Activated CD4-positive, alpha-beta T cell treated with anti-CD3 and anti-CD28 coated beads, Interleukin-2, amount 10 ng/mL, durations not matched to agents 7 days and 5 days (primary cell): ENCODE measurements at regions of chr20 and their contacts with region 1.

Region 1: DNA sequence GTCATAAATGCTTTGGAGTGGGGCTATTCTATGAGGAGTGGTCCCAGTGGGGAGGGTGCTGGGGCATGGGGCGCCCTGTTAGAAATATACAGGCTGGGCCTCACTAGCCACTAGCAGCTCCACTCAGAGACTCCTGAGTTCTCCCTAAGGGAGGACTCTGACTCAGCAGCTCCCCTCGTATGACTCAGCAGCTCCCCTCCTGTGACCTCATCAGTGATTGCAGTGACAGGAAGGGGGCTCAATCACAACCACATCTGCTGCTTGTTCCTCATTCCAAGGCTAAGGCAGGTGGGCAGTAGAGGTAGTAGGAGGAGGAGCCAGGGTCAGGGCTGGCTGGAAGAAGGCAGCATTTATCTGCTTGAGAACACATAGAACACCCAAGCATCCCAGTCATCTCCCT is 73.7 kb downstream of the PRND start:
- DNase-seq: no peak
- H3K4me3 Mint-ChIP-seq: no peak overlapping the region
- H3K27ac Mint-ChIP-seq: peak overlapping the region; percentile 83
- H3K4me1 Mint-ChIP-seq: peaks cover 38% of the 10 kb centered on the region
- H3K27me3 Mint-ChIP-seq: no peaks in the 10 kb centered on the region

Region 2: GRCh38 chr20:4813863-4814695 is 18.7 kb after region 1 on chr20:
- CTCF ChIA-PET with region 1: interaction called, 38 read pairs
- POLR2A ChIA-PET with region 1: interaction called, 3 read pairs
- DNase-seq: peak; percentile 86
- H3K4me3 Mint-ChIP-seq: peak overlapping the region; percentile 88
- H3K27ac Mint-ChIP-seq: peak overlapping the region; percentile 97
- H3K4me1 Mint-ChIP-seq: peaks cover 76% of the 10 kb centered on the region
- H3K27me3 Mint-ChIP-seq: no peaks in the 10 kb centered on the region